ENCODE measurements at regions of chr16 and their contacts with region 1.

Region 1: GRCh38 chr16:25051406-25052150 is 36.4 kb upstream of the ARHGAP17 start:
- DNase-seq: no peak
- H3K4me3 ChIP-seq: no peak overlapping the region
- H3K27ac ChIP-seq: peak overlapping the region; percentile 34
- H3K4me1 ChIP-seq: peaks cover 6% of the 10 kb centered on the region
- H3K27me3 ChIP-seq: no peaks in the 10 kb centered on the region
- CTCF ChIP-seq: no peak

Region 2: GRCh38 chr16:25224731-25225319 is 173.2 kb after region 1 on chr16:
- intact Hi-C with region 1: loop called (anchors 5 kb)
- DNase-seq: no peak
- H3K4me3 ChIP-seq: no peak overlapping the region
- H3K27ac ChIP-seq: no peak overlapping the region
- H3K4me1 ChIP-seq: no peaks in the 10 kb centered on the region
- H3K27me3 ChIP-seq: no peaks in the 10 kb centered on the region
- CTCF ChIP-seq: no peak

Measured in colonic mucosa (tissue), 4 donors.